GM13977 (cell line): ENCODE measurements at regions of chr3 and their contacts with region 1.

Region 1: DNA sequence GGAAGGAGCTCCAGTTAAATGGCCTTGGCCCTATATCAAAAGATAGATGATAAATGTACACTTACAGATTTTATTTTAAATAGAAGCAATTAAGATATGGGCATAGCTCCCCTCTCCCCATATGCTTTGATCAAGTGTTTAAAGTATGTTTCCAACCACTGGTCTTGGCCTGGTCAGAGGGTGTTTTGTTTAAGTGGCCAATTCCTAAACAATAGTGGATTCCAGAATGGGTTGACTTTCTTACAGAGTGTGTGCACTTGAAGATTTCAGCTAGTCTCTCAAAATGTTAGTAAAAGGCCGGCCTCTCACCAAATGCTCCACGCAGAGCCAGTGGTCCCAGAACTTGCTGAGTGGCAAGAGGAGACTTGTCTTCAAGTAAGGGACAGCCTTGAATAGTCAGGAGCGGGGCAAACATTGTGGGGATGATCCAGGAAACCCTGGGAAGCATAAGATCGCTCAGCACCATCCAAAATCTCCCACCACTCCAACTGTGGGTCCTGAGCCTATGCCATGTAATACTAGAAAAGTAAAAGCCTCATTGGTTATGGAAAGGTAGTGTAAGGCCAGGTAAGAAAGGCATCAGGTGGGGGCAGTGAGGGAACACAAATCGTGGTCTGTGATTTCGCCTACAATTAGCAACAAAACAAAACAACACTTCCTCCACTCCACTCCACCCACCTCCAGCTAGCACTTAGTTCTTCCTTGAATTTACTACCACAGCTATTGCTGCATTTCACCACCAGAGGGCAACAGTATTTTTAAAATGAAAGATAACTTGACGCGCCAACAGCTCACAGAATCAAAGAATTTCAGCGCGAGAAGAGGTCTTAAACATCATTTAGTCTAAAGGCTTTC is 4.8 kb downstream of the RARRES1 start:
- DNase-seq: peak; percentile 85
- CTCF ChIP-seq: peak; percentile 89

Region 2: DNA sequence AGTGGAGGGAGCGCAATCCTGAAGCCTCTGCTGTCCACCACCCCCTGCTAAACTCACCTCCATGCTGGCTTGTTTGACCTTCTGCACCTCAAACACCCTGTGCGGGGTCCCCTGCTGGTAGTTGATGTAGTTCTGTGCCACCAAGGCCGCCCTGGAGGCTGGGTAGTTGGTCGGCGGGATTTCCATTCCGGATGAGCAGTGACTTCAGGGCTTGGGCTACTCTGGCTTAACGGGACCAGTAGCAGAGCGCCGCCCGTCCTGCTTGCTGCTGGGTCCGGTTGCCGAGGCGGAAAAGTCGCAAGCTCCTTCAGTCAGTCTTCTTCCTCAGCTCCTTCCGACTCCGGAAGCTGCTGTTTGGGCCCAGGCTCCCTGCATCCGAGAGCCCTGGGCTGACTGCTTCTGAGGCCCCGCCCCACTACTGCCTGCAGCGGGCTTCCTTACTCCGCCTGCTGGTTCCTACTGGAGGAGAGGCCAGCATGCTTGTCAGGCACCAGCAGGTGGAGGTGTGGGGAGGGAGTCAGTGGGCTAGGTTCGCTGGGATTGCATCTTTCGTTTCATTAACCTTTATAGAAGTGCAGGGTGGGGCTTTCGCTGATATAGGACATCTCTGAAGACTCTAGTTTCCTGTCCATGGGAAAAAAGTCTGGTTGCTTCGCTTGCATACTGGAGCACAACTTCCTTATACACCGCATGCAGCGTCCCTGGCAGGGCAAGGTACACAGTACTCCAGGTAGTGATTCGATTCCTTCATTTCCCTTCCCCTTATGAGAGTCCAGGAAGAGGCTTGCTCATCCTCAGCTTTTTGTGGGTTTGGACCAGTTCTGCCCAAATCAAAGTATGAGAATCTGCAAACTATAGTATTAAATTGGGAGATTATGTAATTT is 54.9 kb before region 1 on chr3 and contains the start of gene LXN:
- in situ Hi-C with region 1: no loop called
- DNase-seq: peak; percentile 83
- CTCF ChIP-seq: peak; percentile 66

Region 3: DNA sequence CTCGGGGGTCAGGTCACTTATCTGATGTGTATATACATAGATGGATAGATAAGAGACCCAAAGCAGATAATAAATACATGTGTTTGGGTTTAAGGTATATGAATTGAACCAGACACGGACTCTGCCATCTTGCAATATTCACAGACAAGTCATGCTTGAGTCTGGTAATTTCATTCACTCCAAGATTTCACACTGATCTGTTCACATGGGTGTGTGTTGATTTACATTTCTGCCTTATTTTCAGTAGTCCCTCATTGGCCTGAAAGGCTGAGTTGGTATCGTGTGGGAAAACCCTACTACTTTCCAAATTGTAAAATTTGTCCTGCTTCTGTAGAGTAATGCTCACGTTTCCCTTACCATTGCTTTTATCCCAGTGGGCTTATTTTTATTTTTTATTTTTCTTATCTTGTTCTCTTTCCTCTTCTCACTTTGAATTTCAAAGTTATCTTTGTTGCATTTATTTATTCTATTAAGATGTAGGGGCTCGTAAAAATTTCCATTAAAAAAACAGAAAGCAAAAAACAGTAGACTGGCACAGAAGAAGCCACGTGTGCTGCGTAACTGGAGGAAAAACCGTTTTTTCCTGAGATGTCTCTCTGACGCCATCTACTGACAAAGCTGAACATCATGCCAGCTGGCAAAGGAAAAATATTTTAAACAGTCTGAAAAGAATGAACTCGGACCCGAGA is 63.6 kb after region 1 on chr3:
- in situ Hi-C with region 1: loop called (anchors 10 kb)
- DNase-seq: peak; percentile 27
- CTCF ChIP-seq: peak; percentile 88

Region 4: DNA sequence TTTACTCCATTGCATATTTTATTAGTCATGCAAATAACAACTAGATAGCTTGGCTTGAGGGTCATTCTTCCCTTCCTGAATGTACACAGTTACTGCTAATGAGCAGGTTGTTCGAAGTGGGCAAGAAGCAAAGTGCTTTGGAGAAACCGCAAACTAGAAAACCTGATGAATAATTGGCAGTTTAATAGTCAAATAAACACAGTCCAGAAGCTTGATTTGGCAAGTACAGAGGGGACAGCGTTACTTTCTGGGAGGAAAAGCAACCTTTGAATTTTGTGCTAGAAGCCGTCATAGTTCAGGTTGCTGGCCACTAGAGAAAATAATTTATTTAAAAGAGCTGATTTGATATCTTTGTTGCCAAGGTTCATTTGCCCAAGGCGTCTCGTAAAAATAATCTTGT is 169.3 kb after region 1 on chr3:
- in situ Hi-C with region 1: no loop called
- DNase-seq: no peak
- CTCF ChIP-seq: no peak